ENCODE measurements at regions of chr6 and their contacts with region 1.

Region 1: DNA sequence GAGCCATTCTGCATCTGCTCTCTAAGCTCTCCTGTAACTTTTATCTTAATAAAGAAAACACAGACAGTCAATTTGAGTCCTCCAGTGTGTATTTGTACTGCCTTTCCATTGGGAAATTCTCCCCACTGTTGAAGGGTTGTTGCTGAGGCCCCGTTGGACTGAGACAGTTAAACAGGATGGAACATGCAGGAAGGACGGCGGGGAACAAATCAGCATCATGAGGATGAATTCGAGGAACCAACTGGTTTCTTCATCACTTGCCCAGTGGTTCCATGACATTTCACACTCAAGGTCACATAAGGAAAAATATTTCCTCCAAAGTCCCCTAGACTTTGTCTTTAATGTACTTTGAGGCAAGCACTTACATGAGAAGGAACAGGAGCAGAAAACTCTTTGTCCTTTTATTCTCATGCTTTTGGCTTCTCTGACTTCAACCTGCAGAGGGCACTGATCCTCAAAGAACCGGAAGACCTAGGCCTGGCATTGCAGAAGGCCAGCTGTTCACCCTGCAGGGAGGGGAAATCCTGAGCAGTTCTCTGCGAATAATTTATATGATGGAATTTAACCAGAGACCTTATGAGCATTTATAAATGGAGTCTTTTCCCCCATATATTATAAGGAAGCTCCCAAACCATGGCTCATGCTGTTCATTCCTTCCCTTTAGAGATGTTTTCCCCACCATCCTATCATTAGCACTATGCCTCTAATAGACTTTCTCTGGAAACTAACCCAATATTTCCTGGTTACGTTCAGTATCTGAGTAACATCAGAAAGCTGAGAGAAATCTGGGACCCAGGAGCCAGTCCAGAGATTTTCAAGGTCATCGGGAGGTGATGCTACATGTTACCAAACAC is 55.2 kb upstream of the ADGRF1 start:
- DNase-seq: peak; percentile 50 to 82 (median 62)
- H3K4me3 ChIP-seq: no peak overlapping the region
- H3K27ac ChIP-seq: no peak overlapping the region
- H3K4me1 ChIP-seq: peaks cover 0 to 5% of the 10 kb centered on the region in 2 donors
- H3K27me3 ChIP-seq: no peaks in the 10 kb centered on the region
- CTCF ChIP-seq: peak; percentile 23 to 68 (median 58)
- POLR2A ChIP-seq: no peak

Region 2: DNA sequence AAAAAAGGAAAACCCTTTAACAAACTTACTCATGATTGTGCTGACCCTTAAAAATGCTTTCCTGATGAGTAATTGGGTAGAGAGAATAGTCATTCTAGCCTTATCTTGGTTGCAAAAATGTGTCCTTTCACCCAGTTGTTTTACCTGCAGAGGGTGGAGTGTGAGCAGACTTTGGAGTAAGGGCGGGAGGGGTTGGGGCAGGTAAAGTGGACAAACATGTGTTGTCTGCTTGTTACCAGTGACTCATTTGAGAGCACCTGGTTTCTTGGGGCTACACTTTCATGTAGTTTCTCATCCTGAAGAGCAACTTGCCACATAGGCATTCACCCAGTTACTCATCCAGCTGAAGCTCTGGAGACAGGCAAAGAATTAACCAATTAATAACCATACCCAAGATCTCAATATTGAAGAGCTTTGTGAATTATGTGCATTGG is 91.3 kb after region 1 on chr6:
- intact Hi-C with region 1: no loop called
- DNase-seq: no peak
- H3K4me3 ChIP-seq: no peak overlapping the region
- H3K27ac ChIP-seq: no peak overlapping the region
- H3K4me1 ChIP-seq: no peaks in the 10 kb centered on the region
- H3K27me3 ChIP-seq: no peaks in the 10 kb centered on the region
- CTCF ChIP-seq: no peak
- POLR2A ChIP-seq: no peak

Region 3: DNA sequence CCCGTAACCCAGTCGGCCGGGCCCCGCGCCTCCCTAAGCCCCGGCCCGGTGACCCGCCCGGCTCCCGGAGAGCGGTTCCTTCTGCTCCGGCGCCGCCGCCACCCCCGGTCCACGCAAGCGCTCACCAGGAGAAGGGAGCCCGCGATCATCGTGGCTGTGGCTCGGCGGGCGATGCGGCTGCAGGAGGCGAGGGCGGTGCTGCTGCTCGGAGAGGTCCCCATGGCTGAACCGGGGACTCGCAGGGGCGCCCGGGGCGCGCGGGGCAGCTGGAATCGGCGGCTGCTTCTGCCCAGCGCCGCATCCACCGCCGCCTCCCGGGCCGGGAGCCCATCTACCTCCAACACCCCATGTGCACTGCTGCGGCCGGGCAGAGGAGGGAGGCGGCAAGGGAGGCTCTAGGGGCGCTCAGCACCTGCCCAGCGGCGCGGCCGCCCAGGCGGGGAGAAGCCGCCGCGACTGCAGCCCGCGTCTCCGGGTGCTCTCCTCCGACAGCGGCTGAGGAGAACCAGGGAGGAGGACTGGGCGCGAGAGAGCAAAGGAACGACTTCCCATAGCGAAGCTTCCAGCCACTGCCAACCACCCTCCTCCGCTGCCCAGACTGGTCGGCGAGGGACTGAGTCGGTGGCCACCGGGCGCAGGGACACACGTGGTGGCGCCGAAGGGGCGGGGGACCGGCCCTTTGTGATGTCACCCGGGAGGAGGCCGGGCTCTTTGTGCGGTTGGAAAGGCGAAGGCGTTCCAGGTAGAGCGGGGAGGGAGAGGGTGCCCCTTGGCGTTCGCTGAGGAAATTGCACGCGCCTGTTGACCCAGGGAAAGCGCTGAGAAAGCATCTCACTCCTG is 212.2 kb after region 1 on chr6 and contains the start of gene TNFRSF21:
- intact Hi-C with region 1: loop called (anchors 2 to 5 kb)
- DNase-seq: peak; percentile 88 to 96 (median 91)
- H3K4me3 ChIP-seq: peak within 1 kb of the TSS in 2 of 4 donors; percentile 34 to 80
- H3K27ac ChIP-seq: peak within 1 kb of the TSS in 4 of 5 donors; percentile 2 to 72 (median 56)
- H3K4me1 ChIP-seq: no peaks in the 10 kb centered on the region
- H3K27me3 ChIP-seq: peaks cover under 1% of the 10 kb centered on the region
- CTCF ChIP-seq: peak; percentile 82 to 91 (median 86)
- POLR2A ChIP-seq: peak; percentile 54 to 67
- total RNA-seq, gene TNFRSF21: 1.9 to 13.7 (median 8.3) TPM

Measured in adrenal gland (tissue), 19 donors.